HEK293 (cell line): ENCODE measurements at regions of chr1 and their contacts with region 1.

Region 1: GRCh38 chr1:16243936-16244649 is 7.1 kb upstream of the CPLANE2 start:
- H3K4me3 ChIP-seq: no peak overlapping the region
- H3K27ac ChIP-seq: no peak overlapping the region
- H3K4me1 ChIP-seq: peaks cover 9% of the 10 kb centered on the region
- CTCF ChIP-seq: peak; percentile 77

Region 2: GRCh38 chr1:16187748-16188401 is 56.2 kb before region 1 on chr1:
- CTCF ChIA-PET with region 1: interaction called, 14 read pairs
- POLR2A ChIA-PET with region 1: no interaction called
- H3K4me3 ChIP-seq: no peak overlapping the region
- H3K27ac ChIP-seq: no peak overlapping the region
- H3K4me1 ChIP-seq: no peaks in the 10 kb centered on the region
- CTCF ChIP-seq: peak; percentile 94

Region 3: DNA sequence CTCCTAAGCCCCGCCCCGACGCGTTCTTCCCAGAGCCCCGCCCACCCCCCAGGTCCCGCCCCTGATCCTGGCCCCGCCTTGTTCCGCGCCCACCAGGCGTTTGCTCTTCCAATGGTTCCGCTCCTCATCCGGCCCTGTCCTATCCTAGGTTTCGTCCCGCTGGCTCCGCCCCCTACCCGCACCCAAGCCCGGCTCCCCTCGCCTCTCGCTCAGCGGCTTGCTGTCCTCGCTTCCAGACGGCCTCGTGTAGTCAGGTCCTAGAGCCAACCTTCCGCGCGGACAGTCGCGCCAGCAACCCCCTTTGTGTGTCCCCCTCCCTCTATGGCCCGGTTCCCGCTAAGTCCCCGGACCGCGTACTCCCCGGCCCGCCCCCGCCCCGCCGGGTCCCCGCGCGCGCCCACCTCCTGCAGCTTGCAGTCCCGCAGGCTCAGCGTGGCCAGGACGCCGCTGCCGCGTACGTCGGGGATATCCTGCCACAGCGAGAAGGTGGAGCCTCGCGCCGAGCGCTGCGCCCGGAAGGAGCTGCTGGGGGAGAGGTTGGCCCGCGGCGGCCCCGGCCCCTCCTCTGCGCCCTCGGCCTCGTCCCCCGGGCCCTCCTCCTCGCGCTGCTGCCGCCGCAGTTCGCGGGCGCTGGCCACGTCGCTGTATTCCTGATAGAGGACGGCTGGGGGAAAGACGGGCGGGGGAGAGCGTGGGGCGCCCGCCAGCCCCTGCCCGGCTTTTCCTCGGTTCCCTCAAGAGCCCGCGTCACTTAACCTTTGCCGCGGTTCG is 37.4 kb before region 1 on chr1:
- CTCF ChIA-PET with region 1: interaction called, 17 read pairs
- POLR2A ChIA-PET with region 1: no interaction called
- H3K4me3 ChIP-seq: peak overlapping the region; percentile 31
- H3K27ac ChIP-seq: peak overlapping the region; percentile 57
- H3K4me1 ChIP-seq: no peaks in the 10 kb centered on the region
- CTCF ChIP-seq: no peak

Region 4: DNA sequence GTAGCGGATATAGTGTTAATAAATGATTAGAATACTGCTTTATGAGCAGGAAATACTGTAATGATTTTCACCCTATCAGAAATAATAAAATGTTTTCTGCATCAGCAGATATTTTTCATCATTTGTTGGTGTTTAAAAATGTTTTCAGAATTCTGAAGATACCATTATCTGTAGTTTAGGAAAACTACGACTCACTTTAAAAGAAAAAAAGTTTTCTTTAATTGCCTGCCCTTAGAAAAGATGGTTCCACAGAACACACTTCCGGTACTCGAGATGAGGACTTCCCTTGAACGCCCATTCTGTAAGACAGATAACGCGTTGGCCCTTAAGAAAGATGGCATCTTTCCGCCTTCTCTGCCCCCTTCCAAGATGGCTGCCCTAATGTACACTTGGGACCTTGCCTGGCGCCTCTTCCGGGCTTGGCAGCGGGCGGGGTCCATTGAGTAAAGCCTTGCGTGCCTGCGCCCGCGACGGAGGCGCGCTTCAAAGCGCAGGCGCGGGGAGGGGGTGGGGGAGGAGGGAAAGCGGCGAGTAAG is 122.7 kb after region 1 on chr1 and contains the start of gene SZRD1:
- CTCF ChIA-PET with region 1: interaction called, 22 read pairs
- POLR2A ChIA-PET with region 1: no interaction called
- H3K4me3 ChIP-seq: peak within 1 kb of the TSS; percentile 97
- H3K27ac ChIP-seq: peak within 1 kb of the TSS; percentile 93
- H3K4me1 ChIP-seq: peaks cover 9% of the 10 kb centered on the region
- CTCF ChIP-seq: no peak